GM18951 (cell line): ENCODE measurements at regions of chr11 and their contacts with region 1.

Region 1: DNA sequence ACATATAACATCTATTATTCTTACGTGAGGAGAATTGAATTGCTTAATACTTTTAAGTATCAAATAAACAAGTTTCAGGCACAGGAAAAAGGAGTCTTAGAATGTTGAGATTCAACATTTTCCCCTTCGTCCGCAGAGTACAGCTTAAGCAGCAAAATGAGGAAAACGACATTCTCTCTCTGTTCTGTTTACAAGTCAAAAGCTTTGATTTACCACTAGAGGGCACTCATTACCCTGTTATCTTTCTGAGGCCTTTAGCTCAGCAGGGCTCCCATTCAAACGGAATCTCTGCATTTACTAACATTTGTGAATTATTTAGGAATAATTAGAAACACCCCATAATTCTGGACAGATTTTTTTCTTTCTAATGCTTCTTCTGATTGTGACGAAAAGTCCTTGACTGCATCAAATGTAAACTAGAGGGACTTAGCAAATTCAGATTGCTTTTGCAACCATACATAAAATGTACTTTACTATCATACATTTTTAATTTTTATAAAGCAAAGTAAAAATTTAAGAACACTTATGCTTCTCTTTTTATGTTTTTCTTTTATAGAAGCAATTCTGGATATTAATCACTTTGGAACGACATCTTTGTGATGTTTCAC is 75.0 kb downstream of the JRKL start:
- POLR2A ChIP-seq: no peak

Region 2: DNA sequence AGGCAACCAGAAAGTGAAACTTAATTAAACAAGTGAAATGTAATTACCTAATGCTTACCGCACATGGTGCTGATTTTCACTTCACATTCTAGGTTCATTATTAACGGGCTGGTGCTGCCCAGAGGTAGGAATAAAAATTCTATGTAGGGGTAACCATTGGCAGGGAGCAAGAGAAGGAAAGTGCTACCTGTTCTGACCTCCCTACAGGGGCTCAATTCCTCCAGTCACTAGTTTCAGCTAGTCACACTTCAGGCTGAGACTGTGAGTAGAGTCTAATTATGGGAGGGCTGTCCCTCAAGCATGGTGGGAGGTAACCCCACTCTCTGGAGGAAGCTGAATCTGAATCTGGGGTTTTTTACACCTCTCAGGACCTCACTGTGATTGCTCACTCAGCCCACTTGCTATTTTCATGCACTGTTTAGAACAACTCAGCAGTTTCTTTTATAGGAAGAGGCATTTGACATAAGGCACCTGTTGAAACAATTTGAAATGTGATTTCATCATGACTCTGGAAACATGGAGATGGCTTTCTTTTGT is 197.2 kb before region 1 on chr11:
- in situ Hi-C with region 1: no loop called
- POLR2A ChIP-seq: no peak

Region 3: GRCh38 chr11:96635655-96636054 is 170.9 kb after region 1 on chr11:
- in situ Hi-C with region 1: no loop called
- POLR2A ChIP-seq: no peak

Region 4: DNA sequence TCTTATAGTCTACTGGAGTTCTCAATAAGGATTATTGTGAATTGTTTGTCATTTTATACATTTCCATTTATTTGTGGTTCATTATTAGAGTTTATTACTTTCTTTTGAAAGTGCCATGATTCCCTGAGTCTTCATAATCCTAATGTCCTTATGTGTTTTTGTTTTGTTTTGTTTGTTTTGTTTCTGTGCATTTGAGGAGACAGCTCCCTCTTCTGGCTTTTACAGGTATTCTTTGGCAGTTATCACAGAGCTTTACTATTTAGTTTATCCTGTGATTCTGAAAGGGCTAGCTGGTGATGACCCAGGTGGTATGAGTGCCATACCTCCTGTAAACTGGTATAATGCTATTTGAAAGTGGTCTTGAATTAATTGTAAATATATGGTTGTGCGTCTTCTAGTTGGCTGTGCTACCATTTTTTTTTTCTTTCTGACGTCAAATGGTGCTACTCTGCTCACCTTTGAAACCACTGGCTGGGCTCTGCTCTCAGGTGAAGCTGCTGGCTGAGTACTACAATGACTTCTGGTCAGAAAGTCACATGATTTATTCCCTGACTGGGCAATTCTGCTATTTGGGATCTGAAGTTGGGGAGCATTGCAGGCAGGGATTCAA is 676.2 kb after region 1 on chr11:
- in situ Hi-C with region 1: loop called (anchors 25 kb)
- POLR2A ChIP-seq: no peak